A673 (cell line): ENCODE measurements at regions of chr1 and their contacts with region 1.

Region 1: DNA sequence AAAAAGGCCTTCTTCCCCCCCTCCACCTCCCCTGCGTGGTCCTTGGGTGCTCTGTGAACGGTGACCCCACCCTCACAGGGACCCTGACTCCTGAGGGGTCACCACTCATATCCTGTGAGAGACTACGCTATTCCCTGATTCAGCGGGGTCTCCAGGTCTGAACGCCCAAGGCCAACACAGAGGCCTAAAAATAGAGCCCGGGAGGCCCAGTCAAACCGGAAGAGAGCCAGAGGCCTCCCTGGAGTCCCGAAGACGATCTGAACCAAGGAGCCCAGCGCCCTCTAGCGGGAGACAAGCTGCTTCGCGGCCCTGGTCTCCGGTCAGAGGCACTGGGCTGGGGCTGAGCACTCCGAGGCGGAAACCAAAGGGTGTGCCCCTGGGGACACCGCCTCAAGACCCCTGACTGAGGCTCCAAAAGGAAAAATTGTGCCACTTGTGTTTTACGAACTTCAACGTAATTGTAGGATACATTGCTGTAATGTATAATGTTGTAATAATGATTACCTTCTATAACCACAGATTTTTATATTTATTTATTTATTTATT is 42.4 kb upstream of the PSEN2 start:
- DNase-seq: peak; percentile 95
- H3K4me3 ChIP-seq: no peak overlapping the region
- H3K27ac ChIP-seq: peak overlapping the region; percentile 76
- H3K4me1 ChIP-seq: peaks cover 6% of the 10 kb centered on the region
- H3K27me3 ChIP-seq: no peaks in the 10 kb centered on the region
- CTCF ChIP-seq: peak; percentile 97

Region 2: GRCh38 chr1:226424228-226425003 is 403.6 kb before region 1 on chr1:
- CTCF ChIA-PET with region 1: no interaction called
- POLR2A ChIA-PET with region 1: no interaction called
- intact Hi-C with region 1: loop called (anchors 10 kb)
- DNase-seq: peak; percentile 74
- H3K4me3 ChIP-seq: no peak overlapping the region
- H3K27ac ChIP-seq: no peak overlapping the region
- H3K4me1 ChIP-seq: peaks cover 12% of the 10 kb centered on the region
- H3K27me3 ChIP-seq: no peaks in the 10 kb centered on the region
- CTCF ChIP-seq: peak; percentile 76

Region 3: GRCh38 chr1:226547754-226548191 is 280.3 kb before region 1 on chr1:
- CTCF ChIA-PET with region 1: no interaction called
- POLR2A ChIA-PET with region 1: no interaction called
- intact Hi-C with region 1: loop called (anchors 5 kb)
- DNase-seq: peak; percentile 95
- H3K4me3 ChIP-seq: no peak overlapping the region
- H3K27ac ChIP-seq: no peak overlapping the region
- H3K4me1 ChIP-seq: peaks cover 12% of the 10 kb centered on the region
- H3K27me3 ChIP-seq: peaks cover 29% of the 10 kb centered on the region
- CTCF ChIP-seq: peak; percentile 95

Region 4: DNA sequence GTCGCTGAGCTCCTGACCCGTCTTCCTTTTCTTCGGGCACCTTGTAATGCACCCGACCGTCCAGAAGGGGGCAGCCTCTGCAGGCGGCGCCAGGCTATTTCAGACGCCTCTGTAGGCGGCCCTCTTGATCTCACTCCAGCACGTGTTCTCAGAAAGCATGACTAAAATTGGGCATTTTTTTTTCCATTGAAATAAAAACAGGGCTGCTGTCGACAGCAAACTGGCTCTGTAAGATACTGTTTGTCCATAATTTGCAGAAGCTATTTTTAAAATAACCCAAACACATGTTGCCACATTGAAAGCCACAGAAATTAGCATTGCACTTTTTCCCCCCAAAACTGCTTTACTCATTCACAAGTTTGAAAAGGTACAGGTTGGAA is 201.5 kb before region 1 on chr1:
- CTCF ChIA-PET with region 1: interaction called, 17 read pairs
- POLR2A ChIA-PET with region 1: no interaction called
- intact Hi-C with region 1: loop called (anchors 2 kb)
- DNase-seq: peak; percentile 79
- H3K4me3 ChIP-seq: no peak overlapping the region
- H3K27ac ChIP-seq: no peak overlapping the region
- H3K4me1 ChIP-seq: no peaks in the 10 kb centered on the region
- H3K27me3 ChIP-seq: no peaks in the 10 kb centered on the region
- CTCF ChIP-seq: peak; percentile 98

Region 5: DNA sequence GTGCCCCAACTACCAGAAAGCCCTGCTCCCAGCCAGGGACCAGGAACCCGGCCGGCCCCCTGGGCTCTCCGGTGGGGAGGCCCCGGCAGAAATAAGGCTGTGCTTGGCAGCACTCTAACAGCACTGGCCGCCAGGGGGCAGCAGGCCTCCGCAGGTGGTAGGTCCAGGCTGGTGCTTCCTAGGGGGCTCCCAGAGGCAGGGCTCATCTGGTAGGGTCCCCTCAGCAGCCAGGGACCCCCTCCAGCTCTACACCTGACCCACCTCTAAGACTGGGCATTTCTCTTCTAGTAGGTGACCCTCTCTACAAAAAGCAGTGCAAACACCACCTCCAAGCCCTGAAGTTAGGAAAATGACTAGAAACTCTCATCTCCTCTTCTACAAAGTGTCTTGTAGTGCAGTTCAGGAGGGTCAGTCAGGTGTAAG is 193.9 kb before region 1 on chr1:
- CTCF ChIA-PET with region 1: interaction called, 9 read pairs
- POLR2A ChIA-PET with region 1: no interaction called
- intact Hi-C with region 1: loop called (anchors 1 kb)
- DNase-seq: peak; percentile 69
- H3K4me3 ChIP-seq: no peak overlapping the region
- H3K27ac ChIP-seq: no peak overlapping the region
- H3K4me1 ChIP-seq: no peaks in the 10 kb centered on the region
- H3K27me3 ChIP-seq: no peaks in the 10 kb centered on the region
- CTCF ChIP-seq: peak; percentile 95

Region 6: DNA sequence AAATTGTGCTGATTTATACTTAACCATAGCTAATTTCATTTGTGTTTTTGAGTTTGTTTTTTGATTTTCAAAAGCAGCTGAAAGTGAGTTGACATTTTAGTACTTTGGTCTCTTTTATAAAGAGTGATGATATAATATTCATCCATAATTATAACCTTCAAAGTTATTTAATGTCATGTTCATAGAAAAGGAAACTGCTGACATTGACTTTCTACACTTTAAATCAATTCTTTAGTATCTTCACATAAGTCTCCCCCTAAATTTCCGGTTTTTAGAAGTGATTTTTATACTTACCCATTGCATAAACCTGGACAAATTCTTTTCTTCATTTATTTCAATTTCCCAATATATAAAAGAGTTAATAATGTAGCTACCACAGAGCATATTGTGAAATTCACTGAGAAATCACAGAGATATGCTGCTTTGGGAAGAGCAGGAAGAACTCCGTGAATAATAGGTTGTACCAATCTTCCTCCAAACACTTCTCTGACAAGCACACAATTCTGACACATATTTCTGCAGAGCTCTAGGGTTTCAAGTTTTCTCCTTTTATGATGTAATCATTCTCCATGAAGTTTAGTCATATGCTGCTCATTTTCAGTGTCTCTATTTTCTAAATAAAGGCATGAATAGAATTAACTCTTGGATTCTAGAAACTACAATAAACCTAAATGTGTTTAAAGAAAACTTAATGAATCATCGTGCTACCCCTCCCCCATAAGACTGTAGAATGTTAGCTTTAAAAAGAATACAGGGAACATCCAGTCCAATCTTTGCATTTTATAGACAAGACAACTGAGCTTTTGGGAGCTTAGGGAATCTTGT is 515.9 kb after region 1 on chr1:
- CTCF ChIA-PET with region 1: no interaction called
- POLR2A ChIA-PET with region 1: no interaction called
- intact Hi-C with region 1: no loop called
- DNase-seq: peak; percentile 49
- H3K4me3 ChIP-seq: no peak overlapping the region
- H3K27ac ChIP-seq: no peak overlapping the region
- H3K4me1 ChIP-seq: peaks cover 14% of the 10 kb centered on the region
- H3K27me3 ChIP-seq: peaks cover 33% of the 10 kb centered on the region
- CTCF ChIP-seq: no peak